Left ventricle myocardium inferior (tissue), 1 donor: ENCODE measurements at regions of chr16 and their contacts with region 1.

Region 1: GRCh38 chr16:11535471-11535870 is 51.2 kb downstream of the LITAF start:
- DNase-seq: no peak
- H3K4me3 ChIP-seq: no peak overlapping the region
- H3K27ac ChIP-seq: no peak overlapping the region
- H3K4me1 ChIP-seq: no peaks in the 10 kb centered on the region
- H3K27me3 ChIP-seq: no peaks in the 10 kb centered on the region
- CTCF ChIP-seq: no peak

Region 2: GRCh38 chr16:11639925-11640899 is 104.7 kb after region 1 on chr16:
- intact Hi-C with region 1: loop called (anchors 5 kb)
- DNase-seq: peak; percentile 83
- H3K4me3 ChIP-seq: peak overlapping the region; percentile 19
- H3K27ac ChIP-seq: peak overlapping the region; percentile 94
- H3K4me1 ChIP-seq: peaks cover 20% of the 10 kb centered on the region
- H3K27me3 ChIP-seq: no peaks in the 10 kb centered on the region
- CTCF ChIP-seq: no peak